Sigmoid colon (tissue), 7 donors: ENCODE measurements at regions of chr17 and their contacts with region 1.

Region 1: DNA sequence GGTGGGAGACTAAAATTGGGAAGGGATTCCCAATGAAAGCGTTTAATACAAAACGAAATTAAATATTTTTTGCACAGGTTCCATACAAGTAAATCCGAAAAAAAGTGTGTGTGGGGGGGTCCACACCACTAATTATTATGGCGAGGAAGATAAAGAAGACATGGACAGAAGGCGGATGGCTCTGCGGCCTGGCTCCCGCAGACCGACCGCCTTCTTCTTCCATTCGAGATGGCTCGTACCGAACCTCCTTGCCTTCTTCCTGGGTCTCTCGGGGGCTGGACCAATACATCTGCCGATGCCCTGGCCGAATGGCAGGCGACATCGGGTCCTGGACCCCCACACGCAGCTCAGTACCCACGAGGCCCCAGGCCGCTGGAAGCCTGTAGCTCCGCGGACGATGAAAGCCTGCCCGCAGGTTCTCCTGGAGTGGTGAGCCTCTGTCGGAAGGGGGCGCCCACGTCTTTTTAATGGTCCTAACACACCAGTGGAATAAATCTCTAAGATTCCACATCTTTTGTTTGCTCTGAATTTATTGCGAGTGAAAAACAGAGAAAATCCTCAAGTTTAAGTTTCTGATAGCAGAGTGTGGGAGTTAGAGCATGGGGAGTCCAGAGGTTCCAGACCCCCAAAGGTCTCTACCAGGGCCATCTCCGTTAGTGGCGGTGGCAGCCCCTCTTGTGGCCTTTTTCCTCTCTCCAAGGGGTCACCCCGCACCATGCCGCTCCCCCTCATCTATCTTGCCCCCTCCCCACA is 1.4 kb downstream of the PRAC2 start:
- DNase-seq: peak; percentile 91
- H3K4me3 ChIP-seq: peak overlapping the region in 1 of 4 donors; percentile 11
- H3K27ac ChIP-seq: no peak overlapping the region
- H3K4me1 ChIP-seq: peaks cover 0 to 51% (median 45%) of the 10 kb centered on the region in 4 donors
- H3K27me3 ChIP-seq: peaks cover 74 to 100% (median 100%) of the 10 kb centered on the region in 3 donors
- CTCF ChIP-seq: peak; percentile 31 to 79 (median 69)
- EP300 ChIP-seq: no peak
- POLR2A ChIP-seq: no peak

Region 2: DNA sequence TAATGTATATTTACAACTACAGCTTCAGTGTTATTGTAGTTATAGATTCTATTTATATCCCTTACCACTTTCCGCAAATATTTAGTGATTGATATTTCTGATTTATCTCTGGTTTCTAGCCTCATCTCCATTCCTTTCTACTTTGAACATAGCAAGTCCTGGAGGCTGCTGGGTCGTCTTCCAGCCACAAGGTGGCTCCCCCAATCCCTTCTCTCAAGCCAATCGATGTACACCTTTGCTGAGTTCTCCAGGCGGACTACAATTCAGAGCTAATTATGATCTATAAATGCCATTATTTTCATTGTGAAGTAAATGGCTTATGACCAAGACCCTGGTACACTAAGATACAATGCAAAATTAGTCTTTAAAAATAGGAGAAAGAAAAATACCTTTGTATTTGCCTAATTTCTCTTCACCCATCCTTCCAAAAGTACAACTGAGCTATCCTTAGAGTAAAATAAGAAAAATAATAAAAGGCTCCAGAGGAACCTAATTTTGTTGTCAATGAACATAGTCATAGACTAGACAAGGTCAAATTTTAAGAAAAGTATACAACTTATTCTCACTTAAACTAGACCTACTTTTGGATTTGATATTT is 416.5 kb before region 1 on chr17:
- intact Hi-C with region 1: no loop called
- DNase-seq: peak; percentile 69
- H3K4me3 ChIP-seq: no peak overlapping the region
- H3K27ac ChIP-seq: no peak overlapping the region
- H3K4me1 ChIP-seq: no peaks in the 10 kb centered on the region
- H3K27me3 ChIP-seq: peaks cover 16 to 99% (median 41%) of the 10 kb centered on the region in 3 donors
- CTCF ChIP-seq: peak; percentile 37 to 79 (median 58)
- EP300 ChIP-seq: no peak
- POLR2A ChIP-seq: no peak

Region 3: DNA sequence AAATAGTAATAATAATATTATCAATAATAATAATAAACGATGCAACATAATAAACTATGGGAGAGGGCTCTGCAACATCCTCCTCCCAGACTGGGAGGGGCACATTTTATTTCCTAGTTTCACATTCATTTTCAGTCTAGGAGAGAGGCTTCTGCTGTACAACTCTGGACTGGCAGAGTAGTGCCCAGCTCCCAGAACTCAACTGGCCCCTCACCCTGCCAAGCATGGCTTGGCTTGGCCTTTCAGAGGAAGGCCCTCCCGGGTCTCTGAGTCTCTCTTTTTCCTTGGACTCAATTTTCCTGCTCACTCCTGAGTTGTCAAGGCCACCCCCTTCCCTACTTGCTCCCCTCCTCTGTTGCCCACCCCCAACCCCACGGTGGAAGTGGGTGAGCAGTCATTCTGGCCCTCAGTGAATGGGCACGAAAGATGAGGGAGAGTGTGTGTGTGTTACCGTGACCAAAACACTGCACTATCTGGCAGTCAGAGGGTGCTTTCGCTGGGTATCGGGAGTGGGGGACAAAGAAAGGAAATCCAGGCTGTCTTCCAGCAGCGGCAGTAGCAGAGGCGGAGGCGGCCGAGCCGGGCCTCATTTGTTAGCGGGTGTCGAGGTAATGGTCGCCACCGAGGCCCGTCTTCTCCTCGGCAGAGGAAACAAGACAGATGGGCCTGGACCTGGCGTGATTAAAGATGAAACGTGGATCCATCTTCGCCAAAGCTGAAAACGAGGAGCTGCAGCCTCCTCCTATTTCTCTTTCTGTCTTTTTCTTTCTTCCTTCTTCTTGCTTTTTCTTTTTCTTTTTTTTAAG is 148.6 kb before region 1 on chr17:
- intact Hi-C with region 1: no loop called
- DNase-seq: no peak
- H3K4me3 ChIP-seq: peak overlapping the region; percentile 66 to 84 (median 70)
- H3K27ac ChIP-seq: peak overlapping the region; percentile 94 to 99 (median 96)
- H3K4me1 ChIP-seq: peaks cover 0 to 87% (median 64%) of the 10 kb centered on the region in 4 donors
- H3K27me3 ChIP-seq: no peaks in the 10 kb centered on the region
- CTCF ChIP-seq: no peak
- EP300 ChIP-seq: no peak
- POLR2A ChIP-seq: no peak

Region 4: DNA sequence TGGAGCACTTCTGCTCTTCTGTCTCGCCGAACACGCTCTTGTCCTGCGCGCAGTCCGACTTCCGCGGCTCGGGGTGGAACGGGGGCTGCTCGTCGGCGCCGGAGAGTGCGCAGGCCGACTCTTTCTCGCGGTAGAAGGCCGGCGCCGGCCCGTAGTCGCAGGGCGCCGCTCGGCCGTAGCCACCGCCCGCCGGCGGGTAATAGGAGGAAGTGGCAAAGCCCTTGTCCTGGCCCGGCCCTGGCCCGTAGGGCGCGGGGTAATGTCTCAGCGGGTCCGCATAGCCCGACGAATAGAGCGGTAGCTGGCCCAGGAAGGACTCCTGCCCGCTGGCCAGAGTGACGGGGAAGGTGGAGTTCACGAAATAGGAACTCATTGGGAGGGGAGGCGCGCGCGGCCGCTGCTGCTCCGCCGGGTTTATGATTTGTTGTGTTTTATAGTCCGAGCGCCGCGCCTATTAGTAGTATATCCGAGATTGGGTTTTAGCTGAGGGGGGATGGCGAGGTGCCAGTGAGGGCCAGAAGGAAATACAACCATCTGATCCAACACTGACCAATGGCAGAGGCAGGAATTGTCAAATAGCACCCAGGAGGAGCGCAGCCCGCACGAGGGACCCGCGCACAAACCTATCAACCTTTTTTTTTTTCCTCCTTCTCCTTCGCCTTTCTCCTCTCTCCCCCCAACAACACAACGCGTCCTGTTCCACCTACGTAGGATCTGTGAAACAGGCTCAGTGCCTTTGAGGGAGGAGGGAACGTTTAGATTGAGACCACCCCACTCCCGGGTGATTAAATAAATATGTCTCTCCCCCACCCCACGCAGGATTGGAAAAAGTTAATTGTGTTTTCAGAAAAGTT is 126.4 kb before region 1 on chr17:
- intact Hi-C with region 1: no loop called
- DNase-seq: peak; percentile 93
- H3K4me3 ChIP-seq: peak overlapping the region; percentile 50 to 70 (median 60)
- H3K27ac ChIP-seq: peak overlapping the region; percentile 23 to 99 (median 86)
- H3K4me1 ChIP-seq: peaks cover 0 to 90% (median 81%) of the 10 kb centered on the region in 4 donors
- H3K27me3 ChIP-seq: peaks cover 0 to 11% (median 0%) of the 10 kb centered on the region in 3 donors
- CTCF ChIP-seq: no peak
- EP300 ChIP-seq: no peak
- POLR2A ChIP-seq: peak; percentile 36 to 73

Region 5: DNA sequence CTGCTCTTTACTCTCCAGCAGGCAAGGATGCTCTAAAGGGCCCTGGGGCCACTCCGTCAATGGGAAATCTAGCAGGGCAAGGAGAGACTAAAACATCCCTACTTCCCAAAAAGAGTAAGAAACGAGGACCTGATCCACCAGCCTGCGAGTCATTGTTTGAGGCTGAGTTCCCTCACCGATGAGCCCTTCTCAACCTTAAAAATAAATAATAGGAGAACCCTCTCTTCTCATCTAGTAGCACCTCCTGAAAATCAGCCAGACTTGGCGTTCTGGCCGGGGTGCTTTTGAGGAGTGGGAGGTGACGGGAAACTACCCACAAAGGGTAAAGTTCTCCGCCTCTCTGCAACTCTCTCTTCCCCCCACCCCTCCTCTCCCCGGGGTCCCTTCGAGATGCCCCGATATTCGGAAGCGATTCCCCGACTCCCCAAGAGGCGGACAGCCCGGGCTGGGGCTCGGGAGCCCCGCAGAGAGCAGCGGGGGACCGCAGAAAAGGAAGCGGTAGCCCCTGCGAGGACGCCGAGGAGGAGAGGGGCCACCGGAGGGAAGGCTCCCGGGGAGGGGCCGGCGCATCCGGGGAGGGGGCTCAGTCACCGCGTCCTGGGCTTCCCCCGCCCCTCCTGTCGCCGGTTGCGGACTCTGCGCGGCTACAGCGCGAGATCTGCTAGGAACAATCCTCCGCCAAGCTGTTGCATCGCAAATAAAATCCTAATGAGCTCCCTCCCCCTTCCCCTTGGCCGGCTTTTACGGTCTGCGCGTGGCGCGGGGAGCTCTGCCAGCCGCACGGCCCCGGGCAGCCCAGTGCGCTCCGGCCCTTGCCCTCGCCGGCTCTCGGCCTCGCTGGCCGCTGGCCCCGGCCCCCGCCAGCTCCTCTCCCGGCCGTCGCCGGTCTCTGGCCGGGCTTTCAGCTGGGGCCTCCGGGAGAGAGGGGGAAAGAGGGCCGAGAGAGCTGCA is 99.6 kb before region 1 on chr17:
- intact Hi-C with region 1: loop called (anchors 5 kb)
- DNase-seq: no peak
- H3K4me3 ChIP-seq: peak overlapping the region in 3 of 4 donors; percentile 31 to 45 (median 32)
- H3K27ac ChIP-seq: peak overlapping the region in 1 of 4 donors; percentile 11
- H3K4me1 ChIP-seq: peaks cover 0 to 26% (median 24%) of the 10 kb centered on the region in 4 donors
- H3K27me3 ChIP-seq: peaks cover 83 to 100% (median 99%) of the 10 kb centered on the region in 3 donors
- CTCF ChIP-seq: no peak
- EP300 ChIP-seq: no peak
- POLR2A ChIP-seq: no peak

Region 6: GRCh38 chr17:48671697-48672171 is 52.7 kb before region 1 on chr17:
- intact Hi-C with region 1: loop called (anchors 2 kb)
- DNase-seq: peak; percentile 91
- H3K4me3 ChIP-seq: peak overlapping the region in 3 of 4 donors; percentile 27 to 36 (median 32)
- H3K27ac ChIP-seq: peak overlapping the region in 3 of 4 donors; percentile 30 to 40 (median 33)
- H3K4me1 ChIP-seq: peaks cover 0 to 10% (median 8%) of the 10 kb centered on the region in 4 donors
- H3K27me3 ChIP-seq: peaks cover 0 to 15% (median 1%) of the 10 kb centered on the region in 3 donors
- CTCF ChIP-seq: peak; percentile 38 to 89 (median 79)
- EP300 ChIP-seq: no peak
- POLR2A ChIP-seq: no peak

Region 7: GRCh38 chr17:48791128-48792032 is 67.0 kb after region 1 on chr17:
- intact Hi-C with region 1: loop called (anchors 1 kb)
- DNase-seq: peak; percentile 86
- H3K4me3 ChIP-seq: no peak overlapping the region
- H3K27ac ChIP-seq: no peak overlapping the region
- H3K4me1 ChIP-seq: peaks cover 0 to 25% (median 12%) of the 10 kb centered on the region in 4 donors
- H3K27me3 ChIP-seq: no peaks in the 10 kb centered on the region
- CTCF ChIP-seq: peak; percentile 61 to 90 (median 70)
- EP300 ChIP-seq: no peak
- POLR2A ChIP-seq: no peak

Region 8: DNA sequence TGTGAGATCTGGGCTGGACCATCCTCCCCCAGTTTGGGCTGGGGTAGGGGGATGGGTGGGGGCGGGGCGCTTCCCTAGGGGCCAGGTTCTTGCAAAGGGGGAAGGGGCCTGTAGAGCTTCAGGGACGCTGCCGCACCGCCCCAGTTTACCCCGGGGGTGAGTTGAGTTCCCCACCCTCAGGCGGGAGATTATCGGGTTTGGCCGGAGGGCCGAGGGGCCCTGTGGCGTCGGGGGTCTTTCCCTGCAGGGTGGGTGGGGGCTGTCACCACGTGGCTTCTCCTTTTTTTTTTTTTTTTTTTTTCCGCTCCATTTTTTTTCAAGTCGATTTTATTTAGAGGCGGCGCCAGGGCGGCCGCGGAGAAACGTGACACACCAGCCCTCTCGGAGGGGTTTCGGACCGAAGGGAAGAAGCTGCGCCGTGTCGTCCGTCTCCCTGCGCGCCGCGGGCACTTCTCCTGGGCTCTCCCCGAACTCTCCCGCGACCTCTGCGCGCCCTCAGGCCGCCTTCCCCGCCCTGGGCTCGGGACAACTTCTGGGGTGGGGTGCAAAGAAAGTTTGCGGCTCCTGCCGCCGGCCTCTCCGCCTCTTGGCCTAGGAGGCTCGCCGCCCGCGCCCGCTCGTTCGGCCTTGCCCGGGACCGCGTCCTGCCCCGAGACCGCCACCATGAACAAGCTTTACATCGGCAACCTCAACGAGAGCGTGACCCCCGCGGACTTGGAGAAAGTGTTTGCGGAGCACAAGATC is 272.8 kb after region 1 on chr17 and contains the start of gene IGF2BP1:
- intact Hi-C with region 1: loop called (anchors 5 kb)
- DNase-seq: no peak
- H3K4me3 ChIP-seq: peak within 1 kb of the TSS in 2 of 4 donors; percentile 9 to 15
- H3K27ac ChIP-seq: no peak within 1 kb of the TSS
- H3K4me1 ChIP-seq: peaks cover 0 to 31% (median 27%) of the 10 kb centered on the region in 4 donors
- H3K27me3 ChIP-seq: peaks cover 71 to 100% (median 99%) of the 10 kb centered on the region in 3 donors
- CTCF ChIP-seq: no peak
- EP300 ChIP-seq: no peak
- POLR2A ChIP-seq: no peak
- total RNA-seq, gene IGF2BP1: 0.14 to 0.36 TPM in 2 of 4 donors, not detected in the others